Naive thymus-derived CD8-positive, alpha-beta T cell (primary cell): ENCODE measurements at regions of chr12 and their contacts with region 1.

Region 1: DNA sequence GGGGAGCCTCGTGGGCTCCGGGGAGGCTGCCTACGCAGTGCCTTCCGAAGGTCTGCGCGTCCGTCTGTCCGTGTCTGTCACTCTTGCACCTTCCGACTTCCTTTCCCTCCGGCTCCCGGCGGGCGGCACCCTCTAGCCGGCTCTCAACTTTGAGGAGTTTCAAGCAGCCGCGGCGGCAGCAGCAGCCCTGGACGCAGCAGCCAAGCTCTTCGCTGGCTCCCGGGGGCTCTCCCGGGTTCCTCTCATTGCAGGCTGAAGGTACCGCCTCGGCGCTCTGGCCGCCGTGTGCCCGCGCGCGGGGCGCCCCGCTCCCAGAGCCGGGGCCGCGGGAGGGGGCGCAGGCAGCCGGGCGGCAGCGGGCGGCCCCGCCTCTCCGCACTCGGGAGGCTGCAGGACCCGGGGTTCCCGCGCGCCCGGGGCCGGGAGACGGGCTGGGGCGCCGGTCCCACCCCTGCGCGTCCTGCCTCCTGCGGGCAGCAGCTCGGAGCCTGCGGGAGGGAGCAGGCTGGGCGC is at the starts of genes AMIGO2 and PCED1B:
- DNase-seq: peak; percentile 45 to 78 (median 52)
- ATAC-seq: peak; percentile 56 to 60
- H3K4me3 Mint-ChIP-seq: peak within 1 kb of the TSS; percentile 92 to 99 (median 98)
- H3K27ac Mint-ChIP-seq: peak within 1 kb of the TSS; percentile 92 to 100 (median 96)
- H3K4me1 Mint-ChIP-seq: peaks cover 38 to 88% (median 77%) of the 10 kb centered on the region in 4 donors
- H3K27me3 Mint-ChIP-seq: no peaks in the 10 kb centered on the region
- polyA plus RNA-seq, gene AMIGO2: 28.6 to 53.3 (median 41.1) TPM
- polyA plus RNA-seq, gene PCED1B: 54.9 to 163 (median 127) TPM

Region 2: DNA sequence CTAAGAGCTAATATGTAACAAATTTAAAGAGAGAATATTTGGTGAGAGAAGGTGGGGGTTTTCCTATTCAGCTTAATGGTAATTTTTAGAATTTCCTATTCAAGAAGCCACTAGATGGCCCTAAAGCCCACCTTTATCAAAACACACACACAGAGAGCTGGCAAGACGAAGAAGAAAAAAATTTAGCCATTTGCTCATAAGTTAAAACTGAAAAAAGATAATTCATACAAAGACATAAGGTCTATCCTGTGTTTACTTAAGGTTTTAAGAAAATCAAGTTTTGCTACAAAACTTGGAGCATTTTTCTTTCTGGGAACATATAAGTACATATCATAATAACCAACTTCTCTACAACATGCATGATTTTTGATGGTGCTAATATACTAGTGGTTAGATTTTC is 46.9 kb before region 1 on chr12:
- POLR2A ChIA-PET with region 1: interaction called, 12 read pairs
- DNase-seq: peak in 6 of 10 donors; percentile 34 to 74 (median 68)
- ATAC-seq: peak; percentile 80 to 88
- H3K4me3 Mint-ChIP-seq: peak overlapping the region in 2 of 10 donors; percentile 5
- H3K27ac Mint-ChIP-seq: peak overlapping the region in 5 of 10 donors; percentile 1 to 67 (median 16)
- H3K4me1 Mint-ChIP-seq: peaks cover 15 to 33% (median 20%) of the 10 kb centered on the region in 4 donors
- H3K27me3 Mint-ChIP-seq: no peaks in the 10 kb centered on the region

Region 3: GRCh38 chr12:47190271-47190750 is 110.8 kb after region 1 on chr12:
- POLR2A ChIA-PET with region 1: interaction called, 20 read pairs
- DNase-seq: no peak
- ATAC-seq: no peak
- H3K4me3 Mint-ChIP-seq: peak overlapping the region in 9 of 10 donors; percentile 40 to 87 (median 80)
- H3K27ac Mint-ChIP-seq: peak overlapping the region; percentile 79 to 100 (median 92)
- H3K4me1 Mint-ChIP-seq: peaks cover 56 to 95% (median 89%) of the 10 kb centered on the region in 4 donors
- H3K27me3 Mint-ChIP-seq: no peaks in the 10 kb centered on the region

Region 4: GRCh38 chr12:47207340-47207717 is 127.8 kb after region 1 on chr12:
- POLR2A ChIA-PET with region 1: interaction called, 44 read pairs
- DNase-seq: peak in 8 of 10 donors; percentile 18 to 70 (median 40)
- ATAC-seq: peak; percentile 41 to 59
- H3K4me3 Mint-ChIP-seq: peak overlapping the region; percentile 62 to 98 (median 86)
- H3K27ac Mint-ChIP-seq: peak overlapping the region; percentile 83 to 99 (median 91)
- H3K4me1 Mint-ChIP-seq: peaks cover 45 to 87% (median 83%) of the 10 kb centered on the region in 4 donors
- H3K27me3 Mint-ChIP-seq: no peaks in the 10 kb centered on the region

Region 5: GRCh38 chr12:47216150-47216677 is 136.7 kb after region 1 on chr12:
- POLR2A ChIA-PET with region 1: interaction called, 44 read pairs
- DNase-seq: peak in 9 of 10 donors; percentile 50 to 84 (median 70)
- ATAC-seq: peak; percentile 43 to 69
- H3K4me3 Mint-ChIP-seq: peak overlapping the region; percentile 95 to 99 (median 98)
- H3K27ac Mint-ChIP-seq: peak overlapping the region; percentile 93 to 99 (median 96)
- H3K4me1 Mint-ChIP-seq: peaks cover 9 to 66% (median 23%) of the 10 kb centered on the region in 4 donors
- H3K27me3 Mint-ChIP-seq: no peaks in the 10 kb centered on the region

Region 6: GRCh38 chr12:47221256-47222023 is 141.9 kb after region 1 on chr12:
- POLR2A ChIA-PET with region 1: interaction called, 27 read pairs
- DNase-seq: no peak
- ATAC-seq: no peak
- H3K4me3 Mint-ChIP-seq: peak overlapping the region; percentile 57 to 96 (median 80)
- H3K27ac Mint-ChIP-seq: peak overlapping the region; percentile 65 to 98 (median 84)
- H3K4me1 Mint-ChIP-seq: peaks cover 39 to 83% (median 60%) of the 10 kb centered on the region in 4 donors
- H3K27me3 Mint-ChIP-seq: no peaks in the 10 kb centered on the region

Region 7: GRCh38 chr12:47307680-47308399 is 228.3 kb after region 1 on chr12:
- POLR2A ChIA-PET with region 1: interaction called, 14 read pairs
- DNase-seq: peak in 9 of 10 donors; percentile 27 to 77 (median 50)
- ATAC-seq: peak; percentile 93 to 96
- H3K4me3 Mint-ChIP-seq: peak overlapping the region; percentile 79 to 93 (median 90)
- H3K27ac Mint-ChIP-seq: peak overlapping the region; percentile 69 to 96 (median 92)
- H3K4me1 Mint-ChIP-seq: peaks cover 20 to 45% (median 43%) of the 10 kb centered on the region in 4 donors
- H3K27me3 Mint-ChIP-seq: no peaks in the 10 kb centered on the region